Activated CD4-positive, alpha-beta memory T cell treated with anti-CD3 and anti-CD28 coated beads, Interleukin-2, amount 10 ng/mL, durations not matched to agents 7 days and 5 days (primary cell): ENCODE measurements at regions of chr2 and their contacts with region 1.

Region 1: GRCh38 chr2:99337113-99338028 is at the start of gene EIF5B:
- DNase-seq: peak; percentile 93
- H3K4me3 Mint-ChIP-seq: no peak within 1 kb of the TSS
- H3K27ac Mint-ChIP-seq: no peak within 1 kb of the TSS
- H3K4me1 Mint-ChIP-seq: peaks cover 53% of the 10 kb centered on the region
- H3K27me3 Mint-ChIP-seq: no peaks in the 10 kb centered on the region
- total RNA-seq, gene EIF5B: 37.3 to 38.3 TPM

Region 2: GRCh38 chr2:99141110-99142108 is 196.0 kb before region 1 on chr2 and contains the start of gene C2orf15:
- CTCF ChIA-PET with region 1: no interaction called
- POLR2A ChIA-PET with region 1: interaction called, 22 read pairs
- DNase-seq: peak; percentile 94
- H3K4me3 Mint-ChIP-seq: peak within 1 kb of the TSS; percentile 97
- H3K27ac Mint-ChIP-seq: peak within 1 kb of the TSS; percentile 85
- H3K4me1 Mint-ChIP-seq: peaks cover 23% of the 10 kb centered on the region
- H3K27me3 Mint-ChIP-seq: peaks cover 9% of the 10 kb centered on the region
- total RNA-seq, gene C2orf15: 0.18 to 0.35 TPM

Region 3: GRCh38 chr2:99198103-99199010 is 139.0 kb before region 1 on chr2:
- CTCF ChIA-PET with region 1: no interaction called
- POLR2A ChIA-PET with region 1: no interaction called
- DNase-seq: no peak
- H3K4me3 Mint-ChIP-seq: no peak overlapping the region
- H3K27ac Mint-ChIP-seq: no peak overlapping the region
- H3K4me1 Mint-ChIP-seq: no peaks in the 10 kb centered on the region
- H3K27me3 Mint-ChIP-seq: no peaks in the 10 kb centered on the region

Region 4: GRCh38 chr2:99278793-99279291 is 58.5 kb before region 1 on chr2:
- CTCF ChIA-PET with region 1: no interaction called
- POLR2A ChIA-PET with region 1: no interaction called
- DNase-seq: no peak
- H3K4me3 Mint-ChIP-seq: no peak overlapping the region
- H3K27ac Mint-ChIP-seq: no peak overlapping the region
- H3K4me1 Mint-ChIP-seq: no peaks in the 10 kb centered on the region
- H3K27me3 Mint-ChIP-seq: no peaks in the 10 kb centered on the region

Region 5: DNA sequence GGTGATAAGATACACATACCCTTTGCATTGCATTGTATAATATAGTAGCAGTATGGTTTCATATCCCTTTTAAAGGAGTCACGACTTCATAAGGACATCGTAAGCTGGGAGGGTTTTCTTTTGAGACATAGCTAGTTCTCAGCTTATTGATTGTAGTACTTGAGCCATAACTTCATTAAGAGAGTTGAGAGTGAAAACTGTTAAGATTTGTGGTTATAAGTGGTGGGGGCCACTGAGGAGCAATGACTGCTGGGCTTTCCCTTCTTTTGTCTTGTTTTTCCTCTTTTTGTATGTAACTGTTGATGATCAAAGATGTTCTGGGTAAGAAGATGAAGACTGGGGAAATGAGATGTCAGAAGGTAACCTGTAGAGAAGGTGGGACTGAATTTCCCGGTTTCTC is 10.8 kb after region 1 on chr2:
- CTCF ChIA-PET with region 1: interaction called, 9 read pairs
- POLR2A ChIA-PET with region 1: interaction called, 13 read pairs
- DNase-seq: no peak
- H3K4me3 Mint-ChIP-seq: no peak overlapping the region
- H3K27ac Mint-ChIP-seq: peak overlapping the region; percentile 24
- H3K4me1 Mint-ChIP-seq: peaks cover 30% of the 10 kb centered on the region
- H3K27me3 Mint-ChIP-seq: no peaks in the 10 kb centered on the region

Region 6: DNA sequence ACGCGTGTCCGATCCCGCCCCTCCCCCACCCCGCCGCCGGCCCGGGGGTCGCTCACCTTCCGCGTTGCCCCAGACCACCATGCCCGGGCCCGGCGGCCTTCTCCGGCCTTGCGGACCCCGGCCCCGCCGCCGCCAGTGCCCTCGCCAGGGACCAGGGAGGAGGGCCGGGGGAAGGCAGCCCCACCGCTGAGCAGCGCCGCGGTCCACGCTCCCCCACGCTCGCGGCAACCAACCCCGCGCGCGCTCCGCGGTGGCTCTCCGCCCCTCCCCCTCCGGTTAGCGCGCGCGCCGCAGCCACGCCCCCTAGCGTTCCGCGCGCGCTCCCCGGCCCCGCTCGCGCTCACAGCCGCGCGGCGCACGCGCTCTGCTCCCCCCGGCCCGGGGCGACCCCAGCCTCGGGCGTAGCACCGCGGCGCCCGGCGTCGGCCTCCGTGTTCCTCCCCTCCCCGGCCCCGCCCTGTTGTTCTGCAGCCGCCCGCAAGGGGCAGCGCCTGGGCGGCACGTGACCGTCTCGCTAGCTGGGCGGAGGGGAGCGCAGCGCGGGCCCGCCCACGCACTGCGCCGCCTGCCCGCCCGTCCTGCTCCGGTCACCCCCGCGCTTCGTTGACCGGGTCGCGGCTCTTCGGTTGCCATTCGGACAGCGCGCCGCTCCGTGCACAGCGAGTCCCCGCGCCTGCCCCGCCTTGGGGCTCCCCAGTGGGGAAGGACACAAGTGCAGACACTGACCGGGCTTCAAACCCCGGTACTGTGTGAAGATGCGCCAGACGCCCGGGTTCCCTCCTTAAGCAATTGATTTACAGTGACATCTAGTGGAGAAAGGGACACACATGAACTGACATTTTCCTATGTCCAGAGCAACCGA is 152.6 kb after region 1 on chr2 and contains the start of gene REV1:
- CTCF ChIA-PET with region 1: interaction called, 21 read pairs
- POLR2A ChIA-PET with region 1: interaction called, 10 read pairs
- DNase-seq: peak; percentile 91
- H3K4me3 Mint-ChIP-seq: peak within 1 kb of the TSS; percentile 97
- H3K27ac Mint-ChIP-seq: peak within 1 kb of the TSS; percentile 91
- H3K4me1 Mint-ChIP-seq: peaks cover 22% of the 10 kb centered on the region
- H3K27me3 Mint-ChIP-seq: peaks cover 10% of the 10 kb centered on the region
- total RNA-seq, gene REV1: 27.9 to 29.1 TPM